ENCODE measurements at regions of chr3 and their contacts with region 1.

Region 1: GRCh38 chr3:59857589-59858346 is 807.9 kb upstream of the CFAP20DC start:
- DNase-seq: peak; percentile 89
- ATAC-seq: peak; percentile 97
- H3K4me3 Mint-ChIP-seq: peak overlapping the region; percentile 27
- H3K27ac Mint-ChIP-seq: peak overlapping the region; percentile 47
- H3K4me1 Mint-ChIP-seq: peaks cover 18% of the 10 kb centered on the region
- H3K27me3 Mint-ChIP-seq: no peaks in the 10 kb centered on the region

Region 2: DNA sequence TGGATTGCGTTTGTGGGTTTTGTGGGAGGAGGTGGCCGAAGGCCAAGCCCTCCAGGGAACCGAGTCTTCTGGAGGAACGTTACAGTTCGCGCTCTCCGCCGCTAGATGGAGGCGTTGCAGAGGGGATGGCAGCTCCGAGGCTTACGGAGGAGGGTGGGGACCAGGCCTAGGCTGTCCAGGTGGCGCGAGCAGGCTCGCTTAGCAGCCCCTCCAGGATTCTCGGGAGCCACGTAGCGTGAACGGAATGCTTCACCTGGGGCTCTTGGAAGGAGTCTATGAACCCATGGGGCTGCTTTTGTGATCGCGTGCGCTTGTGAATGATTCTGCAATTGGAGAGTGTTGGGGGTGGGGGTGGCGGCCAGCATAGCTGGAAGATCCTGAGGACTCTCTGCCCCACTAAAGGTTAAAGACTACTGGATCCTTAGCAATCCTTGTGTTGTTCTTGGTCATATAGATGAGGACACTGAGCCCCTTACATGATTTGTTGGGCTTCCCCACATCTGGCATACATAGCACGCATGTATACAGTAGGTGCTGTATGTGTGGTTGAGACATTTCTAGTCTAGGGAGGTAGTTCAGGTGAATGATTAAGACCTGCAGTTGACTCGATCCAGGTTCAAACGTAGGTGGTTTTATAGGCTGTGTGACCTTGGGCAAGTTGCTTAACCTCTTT is 1216.9 kb before region 1 on chr3:
- CTCF ChIA-PET with region 1: no interaction called
- POLR2A ChIA-PET with region 1: no interaction called
- intact Hi-C with region 1: loop called in 1 of 2 experiments (anchors 5 kb)
- DNase-seq: peak; percentile 81
- ATAC-seq: peak; percentile 96
- H3K4me3 Mint-ChIP-seq: no peak overlapping the region
- H3K27ac Mint-ChIP-seq: no peak overlapping the region
- H3K4me1 Mint-ChIP-seq: no peaks in the 10 kb centered on the region
- H3K27me3 Mint-ChIP-seq: peaks cover 1% of the 10 kb centered on the region

Region 3: DNA sequence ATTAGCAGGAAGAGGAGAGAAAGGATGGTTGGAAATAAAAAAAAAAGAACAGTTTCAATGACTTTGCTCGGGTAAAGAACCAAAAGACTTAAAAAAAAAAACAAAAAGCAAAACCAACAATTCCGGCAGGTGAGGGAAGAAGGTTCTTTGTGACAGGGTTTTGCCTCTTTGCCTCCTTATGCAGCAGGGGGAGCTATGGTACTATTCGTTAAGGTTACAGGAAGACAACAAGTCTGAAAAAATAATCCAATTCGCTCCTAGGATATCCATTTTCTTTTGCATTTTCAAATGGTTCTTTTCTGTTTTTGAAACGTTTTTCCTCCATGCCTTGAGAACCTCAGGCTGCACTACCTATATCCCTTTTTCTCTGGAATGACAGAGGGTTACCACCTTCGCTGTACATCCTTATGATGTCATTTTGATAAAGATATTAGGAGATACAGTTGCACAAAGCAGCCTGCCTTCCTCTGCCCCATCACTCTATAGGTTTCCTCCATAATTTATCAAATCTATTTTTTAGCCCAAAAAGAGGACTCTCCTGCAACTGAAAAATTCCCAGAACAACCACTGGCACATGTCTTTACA is 862.9 kb before region 1 on chr3:
- CTCF ChIA-PET with region 1: no interaction called
- POLR2A ChIA-PET with region 1: no interaction called
- intact Hi-C with region 1: loop called (anchors 5 to 10 kb)
- DNase-seq: peak; percentile 47
- ATAC-seq: no peak
- H3K4me3 Mint-ChIP-seq: no peak overlapping the region
- H3K27ac Mint-ChIP-seq: no peak overlapping the region
- H3K4me1 Mint-ChIP-seq: peaks cover 7% of the 10 kb centered on the region
- H3K27me3 Mint-ChIP-seq: peaks cover 5% of the 10 kb centered on the region

Region 4: DNA sequence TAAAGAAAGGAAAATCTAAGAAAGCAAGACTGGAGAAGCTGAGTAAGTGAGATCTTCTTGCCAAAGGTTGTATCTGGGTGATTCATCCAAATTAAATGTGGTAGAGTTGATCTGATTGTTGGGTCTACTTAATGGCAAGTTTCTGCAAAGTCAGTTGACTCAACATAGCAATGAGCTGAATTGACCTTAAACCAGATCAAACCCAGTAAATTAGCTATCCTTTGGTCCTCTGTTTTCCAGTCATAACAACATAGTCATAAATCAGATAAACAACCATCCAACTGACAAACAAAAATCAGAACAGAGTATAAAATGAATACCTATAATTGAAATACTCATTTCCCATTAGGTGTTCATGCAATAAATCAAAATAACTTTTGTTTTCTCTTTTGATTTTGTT is 665.3 kb before region 1 on chr3:
- CTCF ChIA-PET with region 1: no interaction called
- POLR2A ChIA-PET with region 1: no interaction called
- intact Hi-C with region 1: no loop called
- DNase-seq: no peak
- ATAC-seq: no peak
- H3K4me3 Mint-ChIP-seq: no peak overlapping the region
- H3K27ac Mint-ChIP-seq: no peak overlapping the region
- H3K4me1 Mint-ChIP-seq: no peaks in the 10 kb centered on the region
- H3K27me3 Mint-ChIP-seq: no peaks in the 10 kb centered on the region

Region 5: GRCh38 chr3:59212128-59212779 is 645.5 kb before region 1 on chr3:
- CTCF ChIA-PET with region 1: interaction called, 4 read pairs
- POLR2A ChIA-PET with region 1: no interaction called
- intact Hi-C with region 1: loop called (anchors 1 kb)
- DNase-seq: no peak
- ATAC-seq: peak; percentile 74
- H3K4me3 Mint-ChIP-seq: no peak overlapping the region
- H3K27ac Mint-ChIP-seq: no peak overlapping the region
- H3K4me1 Mint-ChIP-seq: peaks cover 6% of the 10 kb centered on the region
- H3K27me3 Mint-ChIP-seq: peaks cover 12% of the 10 kb centered on the region

Region 6: DNA sequence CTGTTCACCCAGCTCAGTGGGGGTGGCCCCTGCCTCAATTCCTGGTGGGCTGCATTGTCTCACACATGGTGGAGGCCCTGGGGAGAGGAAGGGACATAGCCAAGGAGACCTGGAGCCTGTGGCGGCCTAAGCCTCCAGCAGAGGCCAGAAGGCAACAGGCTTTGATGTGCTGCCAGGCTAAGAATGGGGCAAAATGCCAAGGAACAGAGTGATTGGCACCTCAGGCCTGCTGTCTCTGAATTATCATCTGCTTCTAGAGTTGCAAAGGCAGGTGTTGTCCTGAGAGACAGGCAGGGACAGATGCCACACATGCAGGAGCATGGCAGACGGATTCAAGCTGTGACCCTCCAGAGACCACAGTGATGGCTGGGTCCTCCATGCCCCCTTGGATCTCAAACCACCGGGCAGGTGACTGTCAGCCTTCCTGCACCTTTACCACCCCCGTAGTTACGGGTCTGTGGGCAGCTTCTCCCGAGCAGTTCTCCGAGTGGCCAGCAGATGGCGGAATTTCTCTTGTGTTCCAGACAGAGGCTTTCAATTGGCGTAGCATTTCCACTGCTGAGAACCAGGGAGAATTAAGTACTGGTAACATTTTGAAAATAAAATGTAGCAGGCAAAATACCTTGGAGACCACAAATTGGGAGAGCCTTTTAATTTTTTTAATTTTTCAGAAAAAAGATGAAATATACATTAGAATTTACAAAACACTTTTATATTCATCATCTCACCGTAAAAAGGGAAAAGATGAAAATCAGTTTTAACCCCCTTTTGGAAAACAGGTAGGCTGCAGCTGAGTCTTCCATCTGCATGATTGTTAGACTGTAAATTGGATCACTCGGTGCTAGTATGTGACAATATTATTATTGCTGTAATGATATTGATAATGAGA is 282.4 kb before region 1 on chr3:
- CTCF ChIA-PET with region 1: interaction called, 31 read pairs
- POLR2A ChIA-PET with region 1: interaction called, 4 read pairs
- intact Hi-C with region 1: loop called (anchors 1 kb)
- DNase-seq: peak; percentile 92
- ATAC-seq: peak; percentile 86
- H3K4me3 Mint-ChIP-seq: no peak overlapping the region
- H3K27ac Mint-ChIP-seq: no peak overlapping the region
- H3K4me1 Mint-ChIP-seq: peaks cover 3% of the 10 kb centered on the region
- H3K27me3 Mint-ChIP-seq: peaks cover 2% of the 10 kb centered on the region

Region 7: GRCh38 chr3:59845386-59845785 is 12.4 kb before region 1 on chr3:
- CTCF ChIA-PET with region 1: interaction called, 19 read pairs
- POLR2A ChIA-PET with region 1: interaction called, 4 read pairs
- intact Hi-C with region 1: no loop called
- DNase-seq: no peak
- ATAC-seq: no peak
- H3K4me3 Mint-ChIP-seq: no peak overlapping the region
- H3K27ac Mint-ChIP-seq: no peak overlapping the region
- H3K4me1 Mint-ChIP-seq: peaks cover 23% of the 10 kb centered on the region
- H3K27me3 Mint-ChIP-seq: no peaks in the 10 kb centered on the region

Measured in activated CD4-positive, alpha-beta T cell treated with anti-CD3 and anti-CD28 coated beads for 36 hours (primary cell).